Dendritic cell treated with granulocyte-macrophage colony-stimulating factor and Interleukin-4, amounts not matched to agents 40 ng/mL and 50 ng/mL, for 4 days (primary cell): ENCODE measurements at regions of chr10 and their contacts with region 1.

Region 1: GRCh38 chr10:32795598-32796183 is 162.3 kb downstream of the ITGB1 start:
- H3K4me3 Mint-ChIP-seq: no peak overlapping the region
- H3K27ac Mint-ChIP-seq: no peak overlapping the region
- H3K4me1 Mint-ChIP-seq: no peaks in the 10 kb centered on the region
- H3K27me3 Mint-ChIP-seq: no peaks in the 10 kb centered on the region

Region 2: GRCh38 chr10:31836569-31837406 is 958.9 kb before region 1 on chr10:
- intact Hi-C with region 1: no loop called
- H3K4me3 Mint-ChIP-seq: no peak overlapping the region
- H3K27ac Mint-ChIP-seq: peak overlapping the region; percentile 19
- H3K4me1 Mint-ChIP-seq: peaks cover 33% of the 10 kb centered on the region
- H3K27me3 Mint-ChIP-seq: no peaks in the 10 kb centered on the region

Region 3: GRCh38 chr10:32851301-32851700 is 55.6 kb after region 1 on chr10:
- intact Hi-C with region 1: no loop called
- H3K4me3 Mint-ChIP-seq: no peak overlapping the region
- H3K27ac Mint-ChIP-seq: no peak overlapping the region
- H3K4me1 Mint-ChIP-seq: no peaks in the 10 kb centered on the region
- H3K27me3 Mint-ChIP-seq: no peaks in the 10 kb centered on the region

Region 4: DNA sequence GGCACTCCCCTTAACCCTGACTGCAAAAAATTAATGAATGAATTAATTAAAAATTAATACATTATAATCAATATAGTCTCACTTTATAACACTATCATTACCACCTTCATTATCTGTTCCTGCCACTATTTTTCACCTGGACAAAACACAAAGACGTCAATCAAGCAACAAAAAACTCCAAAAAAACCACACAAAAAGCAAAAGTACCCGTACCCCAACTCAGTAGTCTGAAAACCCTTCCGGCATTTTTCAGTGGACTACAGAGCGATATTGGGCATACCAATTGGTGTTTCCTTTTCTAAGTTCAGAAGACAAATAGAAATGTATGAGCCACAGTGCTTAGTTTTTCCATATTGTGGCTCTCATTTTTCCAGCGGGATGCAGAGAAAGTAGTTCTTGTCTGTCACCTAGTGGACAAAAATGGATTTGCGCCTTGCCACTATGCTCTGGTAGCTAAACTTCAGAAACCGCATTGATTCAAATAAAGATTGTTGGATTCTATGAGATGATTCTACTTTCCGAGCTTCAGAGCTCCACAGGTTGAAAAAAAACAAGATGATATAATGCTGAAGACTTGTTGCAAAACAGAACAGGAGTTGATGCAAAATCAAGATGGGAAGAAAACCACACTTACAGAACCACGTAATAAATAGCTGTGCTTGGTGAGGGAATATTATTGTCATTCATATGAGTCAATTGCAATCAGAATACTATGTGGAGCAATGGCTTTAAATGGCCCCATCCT is 213.0 kb after region 1 on chr10:
- intact Hi-C with region 1: loop called (anchors 1 kb)
- H3K4me3 Mint-ChIP-seq: no peak overlapping the region
- H3K27ac Mint-ChIP-seq: no peak overlapping the region
- H3K4me1 Mint-ChIP-seq: peaks cover 23% of the 10 kb centered on the region
- H3K27me3 Mint-ChIP-seq: peaks cover 6% of the 10 kb centered on the region

Region 5: GRCh38 chr10:33155720-33156638 is 360.3 kb after region 1 on chr10:
- intact Hi-C with region 1: loop called (anchors 5 kb)
- H3K4me3 Mint-ChIP-seq: no peak overlapping the region
- H3K27ac Mint-ChIP-seq: no peak overlapping the region
- H3K4me1 Mint-ChIP-seq: no peaks in the 10 kb centered on the region
- H3K27me3 Mint-ChIP-seq: no peaks in the 10 kb centered on the region